ENCODE measurements at regions of chr4 and their contacts with region 1.

Region 1: GRCh38 chr4:17336524-17336961 is 175.3 kb downstream of the QDPR start:
- DNase-seq: peak; percentile 86
- ATAC-seq: peak; percentile 93
- H3K4me3 Mint-ChIP-seq: peak overlapping the region; percentile 54
- H3K27ac Mint-ChIP-seq: peak overlapping the region; percentile 92
- H3K4me1 Mint-ChIP-seq: peaks cover 45% of the 10 kb centered on the region
- H3K27me3 Mint-ChIP-seq: no peaks in the 10 kb centered on the region

Region 2: DNA sequence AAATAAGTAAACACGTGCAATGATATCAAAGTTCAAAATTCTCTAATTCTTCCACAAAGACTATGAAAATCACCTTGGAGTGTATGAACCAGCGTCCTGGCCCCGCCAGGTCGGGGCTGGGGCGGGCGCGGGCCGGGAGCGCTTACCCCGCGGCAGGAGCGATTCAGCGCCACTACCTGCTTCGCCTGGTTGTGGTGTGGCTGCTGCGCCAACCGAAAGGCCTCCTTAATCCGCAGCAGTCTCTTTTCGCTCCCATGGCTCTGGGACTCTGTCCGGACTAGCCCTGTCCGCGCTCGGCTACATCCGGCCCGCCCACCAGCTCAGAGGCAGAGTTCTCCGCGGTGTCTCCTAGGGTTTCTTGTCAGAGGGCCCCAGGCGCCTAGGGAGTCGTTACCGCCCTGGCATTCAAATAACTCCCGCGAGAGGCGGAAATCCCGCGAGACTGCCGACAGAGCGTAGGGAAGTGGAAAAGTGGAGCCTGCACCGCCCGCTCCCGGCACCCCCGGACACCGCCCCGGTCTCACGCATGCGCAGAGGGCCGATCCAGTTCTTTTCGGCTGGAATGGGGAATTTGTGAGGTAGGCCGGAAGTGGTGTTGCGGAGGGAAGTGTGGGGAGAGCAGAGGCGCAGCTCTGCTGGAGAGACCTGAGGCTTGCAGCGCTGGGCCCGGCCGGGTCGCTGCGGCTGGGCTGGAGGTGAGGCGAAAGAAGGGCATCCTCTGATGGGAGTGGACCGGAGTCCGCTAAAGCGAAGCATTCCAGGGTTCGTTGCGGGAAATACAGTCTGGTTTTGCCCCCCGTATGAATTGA is 1655.1 kb before region 1 on chr4 and contains the start of gene FAM200B:
- CTCF ChIA-PET with region 1: no interaction called
- POLR2A ChIA-PET with region 1: no interaction called
- intact Hi-C with region 1: loop called in 1 of 2 experiments (anchors 10 kb)
- DNase-seq: peak; percentile 99
- ATAC-seq: peak; percentile 98
- H3K4me3 Mint-ChIP-seq: peak within 1 kb of the TSS; percentile 98
- H3K27ac Mint-ChIP-seq: peak within 1 kb of the TSS; percentile 96
- H3K4me1 Mint-ChIP-seq: peaks cover 39% of the 10 kb centered on the region
- H3K27me3 Mint-ChIP-seq: no peaks in the 10 kb centered on the region
- total RNA-seq, gene FAM200B: 9.8 to 13.3 TPM

Region 3: GRCh38 chr4:17347445-17347844 is 10.9 kb after region 1 on chr4:
- CTCF ChIA-PET with region 1: interaction called, 20 read pairs
- POLR2A ChIA-PET with region 1: no interaction called
- intact Hi-C with region 1: no loop called
- DNase-seq: peak; percentile 51
- ATAC-seq: peak; percentile 30
- H3K4me3 Mint-ChIP-seq: no peak overlapping the region
- H3K27ac Mint-ChIP-seq: no peak overlapping the region
- H3K4me1 Mint-ChIP-seq: no peaks in the 10 kb centered on the region
- H3K27me3 Mint-ChIP-seq: no peaks in the 10 kb centered on the region

Region 4: DNA sequence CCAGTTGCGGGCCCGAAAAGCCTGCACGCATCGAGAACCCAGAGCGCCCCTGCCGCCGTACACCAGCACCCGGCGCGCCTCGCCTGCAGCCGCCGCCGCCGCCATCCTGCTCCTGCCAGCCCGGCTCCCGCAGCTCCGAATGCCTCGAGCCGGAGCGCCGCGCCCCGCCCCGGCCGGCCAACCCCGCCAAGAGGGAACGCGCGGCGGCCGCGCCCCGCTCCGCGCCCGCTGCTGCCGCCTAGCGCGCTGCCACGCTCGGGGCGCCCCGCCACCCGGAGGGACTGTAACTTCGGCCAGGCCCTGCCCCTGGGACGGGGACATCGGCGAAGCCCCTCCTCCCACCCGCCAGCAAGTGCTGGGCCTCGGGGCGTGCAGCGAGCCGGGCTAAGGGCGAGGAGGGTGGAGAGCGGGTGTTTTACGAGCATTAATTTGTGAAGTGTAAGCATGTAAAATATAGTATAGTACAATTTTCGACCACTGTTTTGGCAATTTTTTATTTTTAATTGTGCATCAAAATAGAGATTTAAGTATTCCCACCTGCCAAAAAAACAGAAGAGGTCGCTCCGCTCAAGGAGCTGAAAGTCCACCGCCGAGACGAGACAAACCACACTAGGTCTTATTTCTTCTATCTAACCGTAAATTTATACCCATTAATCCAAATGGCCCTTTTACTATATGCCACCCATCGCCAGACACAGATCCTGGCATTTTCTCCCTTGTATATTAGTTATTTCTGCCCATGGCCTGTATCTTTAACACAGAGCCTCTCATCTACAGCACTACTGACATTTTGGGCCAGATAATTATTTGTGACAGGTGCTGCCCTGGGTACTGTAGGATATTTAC is 175.6 kb after region 1 on chr4 and contains the start of gene QDPR:
- CTCF ChIA-PET with region 1: no interaction called
- POLR2A ChIA-PET with region 1: interaction called, 3 read pairs
- intact Hi-C with region 1: loop called in 1 of 2 experiments (anchors 5 kb)
- DNase-seq: peak; percentile 88
- ATAC-seq: peak; percentile 95
- H3K4me3 Mint-ChIP-seq: peak within 1 kb of the TSS; percentile 78
- H3K27ac Mint-ChIP-seq: peak within 1 kb of the TSS; percentile 85
- H3K4me1 Mint-ChIP-seq: peaks cover 23% of the 10 kb centered on the region
- H3K27me3 Mint-ChIP-seq: no peaks in the 10 kb centered on the region
- total RNA-seq, gene QDPR: 34.5 to 34.6 TPM

Region 5: GRCh38 chr4:17614416-17615299 is 278.1 kb after region 1 on chr4 and contains the start of gene MED28:
- CTCF ChIA-PET with region 1: no interaction called
- POLR2A ChIA-PET with region 1: no interaction called
- intact Hi-C with region 1: loop called in 1 of 2 experiments (anchors 2 kb)
- DNase-seq: peak; percentile 98
- ATAC-seq: peak; percentile 89
- H3K4me3 Mint-ChIP-seq: peak within 1 kb of the TSS; percentile 98
- H3K27ac Mint-ChIP-seq: peak within 1 kb of the TSS; percentile 97
- H3K4me1 Mint-ChIP-seq: peaks cover 45% of the 10 kb centered on the region
- H3K27me3 Mint-ChIP-seq: no peaks in the 10 kb centered on the region
- total RNA-seq, gene MED28: 43.0 to 58.0 TPM

Measured in activated CD4-positive, alpha-beta T cell treated with anti-CD3 and anti-CD28 coated beads for 36 hours (primary cell).